Heart right ventricle (tissue), 16 donors: ENCODE measurements at regions of chr10 and their contacts with region 1.

Region 1: GRCh38 chr10:96491299-96491698 is 22.4 kb downstream of the TLL2 start:
- DNase-seq: no peak
- ATAC-seq: no peak
- H3K4me3 ChIP-seq: no peak overlapping the region
- H3K27ac ChIP-seq: no peak overlapping the region
- H3K4me1 ChIP-seq: no peaks in the 10 kb centered on the region
- H3K27me3 ChIP-seq: no peaks in the 10 kb centered on the region
- CTCF ChIP-seq: peak in 7 of 9 donors; percentile 20 to 48 (median 34)

Region 2: DNA sequence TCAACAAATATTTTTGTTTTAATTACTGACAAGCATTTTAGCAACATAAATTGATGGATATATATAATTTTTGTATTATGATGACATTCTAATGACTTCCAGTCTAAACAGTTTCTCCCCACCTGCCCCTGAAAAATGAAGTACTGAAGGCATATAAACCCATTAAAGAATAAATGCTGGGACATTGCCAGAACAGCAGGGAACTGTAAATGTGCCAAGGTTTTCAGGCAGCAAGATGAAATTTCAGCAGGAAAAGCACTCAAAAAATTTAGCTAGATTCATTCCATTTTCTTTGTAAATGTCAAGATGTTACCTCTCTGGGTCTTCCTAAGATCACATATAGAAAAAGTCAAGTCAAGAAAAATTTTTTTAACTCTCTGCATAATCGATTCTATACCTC is 33.4 kb after region 1 on chr10:
- intact Hi-C with region 1: loop called in 1 of 10 experiments (anchors 1 kb)
- DNase-seq: no peak
- ATAC-seq: no peak
- H3K4me3 ChIP-seq: no peak overlapping the region
- H3K27ac ChIP-seq: no peak overlapping the region
- H3K4me1 ChIP-seq: peaks cover 0 to 9% (median 1%) of the 10 kb centered on the region in 9 donors
- H3K27me3 ChIP-seq: no peaks in the 10 kb centered on the region
- CTCF ChIP-seq: no peak